PC-3 (cell line): ENCODE measurements at regions of chr11 and their contacts with region 1.

Region 1: DNA sequence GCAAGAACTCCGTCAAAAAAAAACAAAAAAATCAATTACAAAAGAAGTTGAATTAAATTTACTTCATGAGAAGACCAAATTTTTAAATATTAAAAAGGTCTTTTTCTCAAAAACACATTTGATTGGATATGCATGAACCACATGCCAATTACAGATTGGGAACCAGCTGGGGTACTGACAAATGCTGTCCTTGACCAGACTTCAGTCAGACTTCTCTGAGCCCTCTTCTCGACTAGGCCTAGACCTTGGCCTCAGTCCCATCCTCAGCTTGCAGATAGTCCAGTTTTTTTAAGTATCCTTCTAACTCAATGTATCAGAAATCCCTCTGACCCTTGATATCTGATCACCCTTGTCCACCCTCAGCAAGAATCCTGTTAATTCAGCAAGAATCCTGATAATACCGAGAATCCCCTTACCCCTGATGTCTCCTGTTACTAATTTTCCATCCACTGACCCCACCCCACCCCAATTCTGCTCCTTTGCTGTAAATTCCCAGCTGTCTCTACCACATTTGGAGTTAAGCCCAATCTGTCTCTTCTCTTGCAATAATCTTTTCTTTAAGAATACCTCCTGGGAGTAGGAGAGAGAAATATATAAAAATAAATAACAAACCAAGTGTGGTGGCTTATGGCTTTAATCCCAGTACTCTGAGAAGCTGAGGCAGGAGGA is 30.9 kb downstream of the OR4D9 start:
- DNase-seq: no peak
- ATAC-seq: no peak
- H3K4me3 ChIP-seq: no peak overlapping the region
- H3K27ac ChIP-seq: no peak overlapping the region
- H3K4me1 ChIP-seq: peaks cover 4% of the 10 kb centered on the region; the same call in 1 of the 2 replicates
- H3K27me3 ChIP-seq: no peaks in the 10 kb centered on the region
- CTCF ChIP-seq: no peak

Region 2: DNA sequence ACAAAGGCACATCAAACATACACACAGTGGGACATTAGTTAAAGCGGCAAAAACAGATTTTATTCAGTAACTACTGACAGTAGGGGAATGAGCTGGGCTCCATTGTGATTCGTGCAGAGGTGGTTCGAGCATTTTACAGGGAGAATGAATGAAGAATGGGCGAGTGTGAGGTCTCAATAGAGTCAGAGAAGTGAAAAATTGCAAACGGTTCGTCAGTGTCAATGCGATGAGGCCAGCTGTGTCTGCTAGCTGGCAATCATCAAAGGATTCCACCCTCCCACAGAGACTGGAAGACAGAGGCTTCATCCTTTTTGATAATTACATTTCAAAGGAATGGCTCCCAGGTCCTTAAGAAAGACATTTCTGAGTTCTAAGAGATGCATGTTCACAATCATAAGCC is 13.6 kb before region 1 on chr11:
- CTCF ChIA-PET with region 1: no interaction called
- POLR2A ChIA-PET with region 1: no interaction called
- intact Hi-C with region 1: no loop called
- DNase-seq: no peak
- ATAC-seq: no peak
- H3K4me3 ChIP-seq: no peak overlapping the region
- H3K27ac ChIP-seq: no peak overlapping the region
- H3K4me1 ChIP-seq: no peaks in the 10 kb centered on the region
- H3K27me3 ChIP-seq: peaks cover 23% of the 10 kb centered on the region
- CTCF ChIP-seq: no peak

Region 3: DNA sequence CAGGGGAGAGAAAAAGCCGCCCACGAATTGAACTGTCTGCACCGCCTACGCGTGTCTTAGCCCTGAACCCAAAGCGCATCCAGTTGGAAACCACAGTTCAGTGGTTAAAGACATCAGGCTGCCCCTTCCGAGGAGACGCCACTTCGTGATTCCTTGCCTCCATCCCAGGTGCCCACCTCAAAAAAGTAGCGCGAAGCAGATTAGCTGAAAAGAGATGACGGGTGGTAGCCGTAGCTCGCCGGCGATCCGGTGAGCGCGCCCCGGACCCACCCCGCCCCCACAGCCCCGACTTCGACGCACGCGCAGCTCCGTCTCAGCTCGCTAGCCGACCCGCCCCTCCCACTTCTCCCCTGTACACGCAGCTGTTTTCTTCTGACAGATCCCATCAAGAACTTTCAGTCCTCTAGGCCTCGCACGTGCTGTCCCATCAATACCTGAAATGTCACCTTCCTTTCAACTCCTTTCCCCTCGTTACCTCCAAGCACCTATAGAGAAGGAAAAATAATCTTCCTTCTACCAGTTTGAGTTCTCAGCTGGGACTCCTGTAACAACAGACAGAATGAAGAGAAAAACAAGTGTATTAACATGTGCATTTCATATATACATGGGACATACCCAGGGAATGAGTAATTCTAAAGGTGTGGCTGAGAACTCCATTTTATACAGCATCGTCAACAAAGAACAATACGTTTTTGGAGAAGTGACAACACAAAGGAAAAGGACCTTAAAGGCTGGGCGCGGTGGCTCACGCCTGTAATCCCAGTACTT is 18.6 kb after region 1 on chr11:
- CTCF ChIA-PET with region 1: no interaction called
- POLR2A ChIA-PET with region 1: interaction called, 10 read pairs
- intact Hi-C with region 1: loop called (anchors 1 kb)
- DNase-seq: peak; percentile 95
- ATAC-seq: peak; percentile 64
- H3K4me3 ChIP-seq: peak overlapping the region; percentile 96
- H3K27ac ChIP-seq: peak overlapping the region; percentile 89
- H3K4me1 ChIP-seq: peaks cover 6% of the 10 kb centered on the region; the same call in 1 of the 2 replicates
- H3K27me3 ChIP-seq: no peaks in the 10 kb centered on the region
- CTCF ChIP-seq: no peak

Region 4: DNA sequence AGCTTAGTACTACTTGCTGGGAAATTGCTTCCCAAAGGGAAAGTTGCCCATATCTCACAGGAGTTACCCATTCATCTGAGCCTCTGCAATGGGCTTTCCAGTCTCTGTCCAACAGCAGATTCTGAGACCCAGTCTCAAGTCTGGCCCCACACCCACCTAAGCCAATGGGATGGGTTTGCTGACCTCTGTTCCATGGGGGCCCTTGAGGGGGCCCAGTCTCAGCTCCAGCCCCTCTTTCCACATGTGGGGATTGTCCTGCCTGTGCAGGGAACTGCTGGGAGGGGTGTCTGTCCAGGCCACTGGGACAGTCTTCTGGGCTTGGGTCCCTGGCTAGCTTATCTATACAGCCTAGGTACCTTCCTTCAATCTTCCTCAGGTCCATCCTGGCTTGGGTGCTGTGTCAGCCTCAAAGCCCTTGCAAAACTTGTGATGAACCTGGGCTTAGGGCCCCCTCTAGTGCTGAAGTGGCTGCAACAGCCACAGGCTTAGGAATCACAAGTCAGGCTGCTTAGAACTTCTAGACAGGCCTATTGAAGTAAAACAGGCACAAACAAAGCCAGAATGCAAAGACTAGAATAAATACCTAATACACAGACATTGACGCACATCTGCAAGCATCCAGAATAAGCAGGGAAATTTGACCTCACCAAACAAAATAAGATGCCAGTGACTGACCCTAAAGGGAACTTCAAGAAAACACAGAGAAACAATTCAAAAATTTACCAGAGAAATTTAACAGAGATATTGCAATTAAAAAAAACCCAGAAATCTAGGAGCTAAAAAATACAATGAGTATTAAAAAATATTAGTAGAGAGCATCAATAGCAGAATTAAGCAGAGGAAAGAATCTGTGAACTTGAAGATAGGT is 138.2 kb after region 1 on chr11:
- CTCF ChIA-PET with region 1: no interaction called
- POLR2A ChIA-PET with region 1: interaction called, 3 read pairs
- intact Hi-C with region 1: loop called (anchors 1 kb)
- DNase-seq: peak; percentile 87
- ATAC-seq: peak; percentile 100
- H3K4me3 ChIP-seq: no peak overlapping the region
- H3K27ac ChIP-seq: no peak overlapping the region
- H3K4me1 ChIP-seq: no peaks in the 10 kb centered on the region
- H3K27me3 ChIP-seq: no peaks in the 10 kb centered on the region
- CTCF ChIP-seq: peak; percentile 97

Region 5: GRCh38 chr11:59802639-59803176 is 260.4 kb after region 1 on chr11:
- CTCF ChIA-PET with region 1: interaction called, 12 read pairs
- POLR2A ChIA-PET with region 1: no interaction called
- intact Hi-C with region 1: loop called (anchors 10 kb)
- DNase-seq: peak; percentile 84
- ATAC-seq: peak; percentile 46
- H3K4me3 ChIP-seq: no peak overlapping the region
- H3K27ac ChIP-seq: no peak overlapping the region
- H3K4me1 ChIP-seq: peaks cover 25% of the 10 kb centered on the region
- H3K27me3 ChIP-seq: no peaks in the 10 kb centered on the region
- CTCF ChIP-seq: peak; percentile 89

Region 6: DNA sequence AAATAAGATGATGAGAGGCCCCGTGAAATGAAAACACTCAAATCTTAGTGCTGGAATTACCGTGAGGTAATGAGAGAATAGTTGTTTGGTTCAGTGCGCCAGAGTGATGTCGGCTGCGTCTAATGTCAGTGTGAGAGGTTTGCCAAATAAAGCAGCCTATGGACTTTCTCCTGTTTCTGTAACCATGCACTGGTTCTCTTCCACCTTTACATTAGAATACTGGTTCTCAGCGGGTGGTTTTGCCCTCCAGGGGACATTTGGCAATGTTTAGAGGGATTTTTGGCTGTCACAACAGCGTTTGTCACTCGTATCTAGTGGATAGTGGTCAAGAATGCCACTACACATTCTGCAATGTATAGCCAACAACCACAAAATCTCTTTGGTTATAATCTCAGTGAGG is 475.8 kb after region 1 on chr11:
- CTCF ChIA-PET with region 1: no interaction called
- POLR2A ChIA-PET with region 1: no interaction called
- intact Hi-C with region 1: no loop called
- DNase-seq: no peak
- ATAC-seq: no peak
- H3K4me3 ChIP-seq: no peak overlapping the region
- H3K27ac ChIP-seq: no peak overlapping the region
- H3K4me1 ChIP-seq: no peaks in the 10 kb centered on the region
- H3K27me3 ChIP-seq: no peaks in the 10 kb centered on the region
- CTCF ChIP-seq: no peak